ENCODE measurements at regions of chr2 and their contacts with region 1.

Region 1: DNA sequence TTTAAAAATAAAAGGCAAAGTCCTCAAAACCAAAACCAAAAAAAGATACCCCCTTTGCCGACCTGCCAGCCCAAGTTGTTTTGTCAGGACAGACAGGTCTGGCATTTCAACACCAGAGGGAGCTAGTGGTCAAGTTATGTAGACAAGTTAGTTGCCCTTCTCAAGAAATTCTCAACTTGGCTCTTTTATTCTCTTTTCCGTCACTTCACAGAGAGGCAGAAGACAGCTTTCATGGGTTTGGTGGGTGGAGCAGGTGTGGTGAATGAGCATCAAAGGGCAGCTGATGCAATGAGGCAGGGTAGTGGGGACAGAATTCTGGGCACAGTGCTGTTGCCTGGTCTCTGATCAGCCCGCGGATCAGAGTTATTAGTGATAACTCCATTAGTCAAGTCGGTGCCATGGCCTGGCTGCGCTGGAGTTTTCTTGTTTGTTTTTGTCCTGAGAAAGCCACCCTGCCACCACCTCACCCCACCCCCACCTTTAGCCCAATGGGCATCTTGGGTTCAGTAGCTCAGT is 303.7 kb upstream of the EPAS1 start:
- DNase-seq: peak; percentile 59 to 74
- H3K4me3 ChIP-seq: no peak overlapping the region
- H3K27ac ChIP-seq: peak overlapping the region; percentile 88
- H3K4me1 ChIP-seq: peaks cover 36% of the 10 kb centered on the region
- H3K27me3 ChIP-seq: no peaks in the 10 kb centered on the region
- CTCF ChIP-seq: peak; percentile 95

Region 2: DNA sequence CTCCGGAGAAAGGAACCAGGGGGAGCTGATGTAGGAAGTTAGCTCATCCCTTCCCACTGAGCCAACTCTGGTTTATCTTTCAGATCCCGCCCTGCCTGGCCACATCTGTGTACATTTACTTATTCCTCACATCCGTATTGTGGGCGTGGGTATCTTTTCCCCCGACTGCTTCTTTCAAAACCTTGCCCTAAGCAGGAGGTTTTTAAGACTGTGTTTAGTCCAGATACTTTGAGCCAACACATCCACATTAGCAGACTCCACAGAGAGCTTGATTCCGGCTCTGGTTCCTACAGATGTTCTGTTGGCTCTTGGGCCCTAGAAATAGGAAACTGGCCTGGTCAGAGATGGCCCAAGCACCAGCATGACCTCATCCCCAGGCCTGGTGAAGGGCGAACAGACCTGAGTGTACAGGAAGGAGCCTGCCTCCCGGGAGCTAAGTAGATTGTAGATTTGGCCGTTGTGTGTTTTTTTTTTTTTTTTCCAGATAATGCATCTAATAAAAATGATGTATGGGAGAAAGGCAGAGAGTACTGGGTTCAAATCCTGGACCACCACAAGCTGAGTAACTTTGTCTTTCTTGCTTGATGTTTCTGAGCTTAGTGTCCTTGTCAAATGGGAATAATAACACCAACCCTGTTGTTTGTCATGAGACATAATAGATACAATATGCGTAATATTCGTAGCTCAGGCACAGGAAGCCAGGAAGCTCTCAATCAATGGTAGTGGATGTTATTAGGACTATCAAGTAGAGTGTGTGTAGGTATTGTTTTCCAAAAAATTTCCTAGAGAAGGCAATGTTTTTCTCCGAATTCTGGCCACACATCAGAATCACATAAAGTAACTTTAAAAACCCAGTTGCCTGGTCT is 249.8 kb before region 1 on chr2:
- CTCF ChIA-PET with region 1: no interaction called
- POLR2A ChIA-PET with region 1: no interaction called
- intact Hi-C with region 1: no loop called
- DNase-seq: no peak
- H3K4me3 ChIP-seq: no peak overlapping the region
- H3K27ac ChIP-seq: no peak overlapping the region
- H3K4me1 ChIP-seq: no peaks in the 10 kb centered on the region
- H3K27me3 ChIP-seq: no peaks in the 10 kb centered on the region
- CTCF ChIP-seq: no peak

Region 3: GRCh38 chr2:45946023-45946422 is 47.5 kb before region 1 on chr2:
- CTCF ChIA-PET with region 1: no interaction called
- POLR2A ChIA-PET with region 1: no interaction called
- intact Hi-C with region 1: loop called (anchors 1 kb)
- DNase-seq: peak; percentile 89 to 98
- H3K4me3 ChIP-seq: no peak overlapping the region
- H3K27ac ChIP-seq: peak overlapping the region; percentile 39
- H3K4me1 ChIP-seq: peaks cover 44% of the 10 kb centered on the region
- H3K27me3 ChIP-seq: no peaks in the 10 kb centered on the region
- CTCF ChIP-seq: no peak

Region 4: DNA sequence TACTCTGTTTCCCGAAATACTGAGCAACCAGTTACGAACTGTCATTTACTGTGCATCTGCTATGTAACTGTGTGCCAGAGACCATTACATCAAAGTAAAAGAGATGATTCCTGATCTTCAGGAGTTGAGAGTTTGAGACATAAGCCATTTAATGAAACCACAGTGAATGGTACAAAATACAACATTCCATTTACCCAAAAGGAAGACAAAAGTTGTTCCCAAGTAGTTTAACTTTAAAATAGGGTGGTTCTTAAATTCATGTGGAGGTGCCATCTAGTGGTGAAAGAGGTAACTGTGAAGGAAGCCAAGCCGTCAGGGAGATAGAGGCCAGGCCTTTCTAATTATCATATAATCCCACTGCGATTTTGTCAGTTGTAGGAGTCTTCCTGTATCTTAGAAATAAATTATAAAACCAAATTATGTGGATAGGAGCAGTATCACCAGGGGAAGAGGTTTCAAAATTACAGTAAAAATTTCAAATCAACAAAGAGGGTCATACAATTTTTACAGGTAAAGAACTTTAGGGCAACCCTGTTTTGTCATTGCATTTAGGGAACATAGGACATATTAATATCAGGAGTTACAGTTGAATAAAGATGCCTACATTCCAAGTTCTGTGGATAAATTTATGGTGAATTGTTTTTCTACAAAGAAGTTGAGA is 371.4 kb after region 1 on chr2:
- CTCF ChIA-PET with region 1: no interaction called
- POLR2A ChIA-PET with region 1: no interaction called
- intact Hi-C with region 1: loop called (anchors 1 kb)
- DNase-seq: peak; percentile 35 to 49
- H3K4me3 ChIP-seq: no peak overlapping the region
- H3K27ac ChIP-seq: no peak overlapping the region
- H3K4me1 ChIP-seq: 0 out of 2 replicates have a peak, but pooled peaks cover 12% of the 10 kb centered on the region
- H3K27me3 ChIP-seq: no peaks in the 10 kb centered on the region
- CTCF ChIP-seq: peak; percentile 98

Region 5: DNA sequence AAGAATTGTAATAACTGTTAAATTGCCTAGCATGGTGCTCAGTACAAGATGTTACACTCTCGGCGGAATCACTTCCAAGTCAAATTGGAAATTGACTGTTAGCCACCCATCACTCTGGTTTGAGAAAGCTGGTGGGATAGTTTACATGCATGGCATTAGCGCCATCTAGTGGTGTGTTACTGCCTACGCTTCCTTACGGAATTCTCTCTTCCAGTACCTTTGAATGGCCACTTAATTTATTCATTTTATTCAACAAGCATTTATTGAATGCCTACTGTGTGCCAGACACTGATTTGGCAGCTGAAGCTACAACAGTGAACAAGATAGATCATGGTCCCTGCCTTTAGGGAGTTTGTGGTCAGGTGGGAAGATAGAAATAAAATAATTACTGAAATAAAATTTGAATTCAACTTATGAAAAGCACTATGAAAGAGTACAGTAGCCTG is 657.0 kb after region 1 on chr2:
- CTCF ChIA-PET with region 1: no interaction called
- POLR2A ChIA-PET with region 1: no interaction called
- intact Hi-C with region 1: loop called (anchors 2 kb)
- DNase-seq: peak; percentile 61 to 70
- H3K4me3 ChIP-seq: no peak overlapping the region
- H3K27ac ChIP-seq: no peak overlapping the region
- H3K4me1 ChIP-seq: peaks cover 30% of the 10 kb centered on the region
- H3K27me3 ChIP-seq: no peaks in the 10 kb centered on the region
- CTCF ChIP-seq: peak; percentile 98

Region 6: DNA sequence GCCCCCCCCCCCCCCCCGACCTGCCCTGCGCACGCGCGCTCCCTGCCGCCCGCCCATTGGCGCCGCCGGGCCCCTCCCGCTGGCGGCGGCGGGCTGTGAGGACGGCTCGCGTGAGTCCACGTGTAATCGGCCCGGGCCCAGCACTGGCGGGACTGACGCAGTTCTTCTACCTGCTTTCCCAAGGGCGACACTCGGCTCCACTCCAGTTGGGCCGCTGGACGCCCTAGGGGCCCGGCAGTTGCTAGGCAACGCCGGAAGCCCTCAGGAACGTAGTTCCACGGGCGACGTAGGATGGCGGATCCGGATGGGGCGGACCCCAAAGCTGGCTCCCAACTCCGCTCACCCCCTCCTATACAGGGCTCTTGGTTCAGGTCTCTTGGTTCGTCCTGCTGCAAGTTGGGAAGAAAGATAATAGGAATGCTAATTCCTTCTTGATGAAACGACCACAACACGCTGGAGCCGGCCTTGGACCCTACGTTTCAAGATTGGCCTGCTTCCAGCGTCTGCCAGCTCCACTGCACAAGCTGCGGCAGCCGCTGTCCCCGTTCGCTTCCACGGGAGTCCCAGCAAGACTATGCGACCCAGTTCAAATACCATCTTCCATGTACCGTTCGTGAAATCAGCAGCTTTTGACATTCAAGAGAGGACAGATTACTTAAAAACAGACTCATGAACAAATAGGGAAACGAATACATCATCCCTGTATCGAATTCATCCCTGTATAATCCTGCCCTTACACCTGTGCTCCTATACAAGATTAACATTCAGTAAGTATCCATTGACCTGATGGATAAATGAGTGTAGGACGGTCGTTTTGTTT is 922.5 kb after region 1 on chr2:
- CTCF ChIA-PET with region 1: no interaction called
- POLR2A ChIA-PET with region 1: interaction called, 27 read pairs
- intact Hi-C with region 1: no loop called
- DNase-seq: peak; percentile 93
- H3K4me3 ChIP-seq: peak overlapping the region; percentile 76
- H3K27ac ChIP-seq: peak overlapping the region; percentile 75
- H3K4me1 ChIP-seq: peaks cover 60% of the 10 kb centered on the region
- H3K27me3 ChIP-seq: no peaks in the 10 kb centered on the region
- CTCF ChIP-seq: no peak

Measured in PC-9 (cell line).